Left cardiac atrium (tissue), 4 donors: ENCODE measurements at regions of chr11 and their contacts with region 1.

Region 1: GRCh38 chr11:20131788-20132666 is 28.2 kb downstream of the DBX1 start:
- DNase-seq: peak; percentile 63
- ATAC-seq: peak; percentile 72 to 77

Region 2: GRCh38 chr11:19553683-19554333 is 578.2 kb before region 1 on chr11:
- intact Hi-C with region 1: loop called in 1 of 2 experiments (anchors 10 kb)
- DNase-seq: peak; percentile 84
- ATAC-seq: peak; percentile 87 to 88

Region 3: GRCh38 chr11:19938169-19938856 is 193.7 kb before region 1 on chr11:
- intact Hi-C with region 1: loop called (anchors 5 to 10 kb)
- DNase-seq: peak; percentile 52
- ATAC-seq: peak in 1 of 2 donors; percentile 68

Region 4: DNA sequence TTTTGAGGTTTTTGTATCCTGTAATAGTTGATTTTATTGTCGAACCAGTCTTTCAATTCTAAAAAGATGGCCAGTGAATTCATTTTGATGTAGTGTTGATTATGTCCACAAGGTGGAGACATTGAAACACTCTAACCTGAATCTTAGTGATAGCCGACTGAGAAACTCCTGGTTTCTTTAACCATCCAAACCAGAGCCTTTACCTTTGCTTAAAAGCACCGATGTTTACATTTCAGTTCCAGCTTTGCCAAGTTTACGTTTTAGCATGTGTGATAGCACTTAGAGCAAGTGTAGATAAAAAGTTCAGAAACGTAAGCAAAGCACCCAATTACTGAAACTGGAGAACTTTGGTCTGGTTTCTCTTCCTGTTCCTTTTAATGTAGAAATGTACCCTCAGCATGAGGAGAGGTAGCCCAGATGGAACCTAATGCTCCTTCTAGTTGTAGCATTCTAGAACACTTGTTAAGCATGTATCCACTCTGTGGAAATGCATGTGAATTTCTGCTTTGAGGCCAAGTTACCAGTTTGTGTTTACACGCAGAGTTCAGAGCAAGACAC is 180.4 kb before region 1 on chr11:
- intact Hi-C with region 1: loop called (anchors 2 to 10 kb)
- DNase-seq: no peak
- ATAC-seq: peak; percentile 5 to 40

Region 5: GRCh38 chr11:20337526-20338154 is 205.6 kb after region 1 on chr11:
- intact Hi-C with region 1: loop called in 1 of 2 experiments (anchors 5 kb)
- DNase-seq: no peak
- ATAC-seq: no peak

Region 6: DNA sequence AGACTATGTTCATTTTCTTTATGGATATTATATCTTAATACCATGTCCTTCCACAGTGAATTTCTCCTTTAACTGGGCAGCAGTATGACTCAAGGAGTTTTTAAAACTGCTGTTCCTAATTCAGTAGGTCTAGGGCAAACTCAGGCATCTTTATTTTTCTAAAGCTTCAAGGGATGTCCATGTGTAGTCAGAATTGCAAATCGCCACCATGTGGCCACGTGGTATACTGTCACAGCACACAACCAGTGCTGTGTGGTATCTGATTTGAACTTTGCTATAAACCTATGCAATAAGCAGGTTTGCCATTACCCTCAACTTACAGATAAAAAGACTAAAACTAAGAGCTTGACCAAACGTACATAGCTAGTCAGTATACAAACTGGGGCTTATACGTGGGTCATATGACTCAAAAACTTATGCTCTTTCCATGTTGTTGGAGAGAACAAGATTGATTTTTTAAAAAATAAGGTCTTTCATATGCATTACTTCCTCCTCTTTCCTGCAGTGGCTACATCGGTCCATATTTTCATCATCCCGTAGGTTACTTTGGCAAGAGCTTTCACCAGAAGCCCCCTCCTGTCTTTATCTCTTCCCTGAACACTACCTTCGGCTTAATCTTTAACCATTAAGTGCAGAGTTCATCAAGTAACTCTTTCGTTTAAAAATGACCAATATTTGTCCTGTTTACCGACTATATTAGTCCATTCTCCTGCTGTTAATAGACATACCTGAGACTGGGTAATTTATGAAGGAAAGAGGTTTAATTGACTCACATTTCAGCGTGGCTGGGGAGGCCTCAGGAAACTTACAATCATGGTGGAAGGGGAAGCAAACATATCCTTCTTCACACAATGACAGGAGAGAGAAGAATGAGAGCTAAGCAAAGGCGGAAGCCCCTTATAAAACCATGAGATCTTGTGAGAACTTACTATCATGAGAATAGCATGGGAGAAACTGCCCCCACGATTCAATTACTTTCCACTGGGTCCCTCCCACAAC is 223.5 kb after region 1 on chr11:
- intact Hi-C with region 1: loop called (anchors 2 to 5 kb)
- DNase-seq: peak; percentile 33
- ATAC-seq: peak in 1 of 2 donors; percentile 75